ENCODE measurements at regions of chr2 and their contacts with region 1.

Region 1: GRCh38 chr2:157194097-157194688 is 63.3 kb upstream of the GALNT5 start:
- H3K4me3 ChIP-seq: no peak overlapping the region
- H3K27ac ChIP-seq: no peak overlapping the region
- H3K4me1 ChIP-seq: no peaks in the 10 kb centered on the region
- CTCF ChIP-seq: peak; percentile 31; the same call in 1 of the 2 replicates

Region 2: DNA sequence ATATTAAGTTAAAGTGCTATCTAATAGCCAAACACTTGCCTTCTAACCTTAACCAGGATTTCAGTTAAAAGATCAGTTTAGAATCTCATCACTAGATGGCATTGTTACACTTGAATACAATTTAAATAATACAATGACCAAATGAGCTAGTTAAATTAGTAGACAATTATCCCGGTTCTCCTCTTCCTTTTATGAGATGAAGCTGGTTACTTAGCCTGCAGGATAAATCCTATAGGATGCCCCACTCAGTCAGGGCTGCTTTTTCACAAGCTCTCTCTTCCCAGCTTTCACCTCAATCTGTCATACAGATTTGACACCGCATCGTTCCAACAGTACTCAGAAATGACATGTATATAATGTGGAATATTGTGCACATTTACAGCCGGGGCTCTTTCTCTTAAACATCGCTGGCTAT is 1816.9 kb before region 1 on chr2:
- CTCF ChIA-PET with region 1: interaction called, 21 read pairs
- POLR2A ChIA-PET with region 1: no interaction called
- H3K4me3 ChIP-seq: no peak overlapping the region
- H3K27ac ChIP-seq: no peak overlapping the region
- H3K4me1 ChIP-seq: no peaks in the 10 kb centered on the region
- CTCF ChIP-seq: no peak